ENCODE measurements at regions of chr12 and their contacts with region 1.

Region 1: GRCh38 chr12:45728630-45729232 is 775 bp upstream of the ARID2 start:
- DNase-seq: peak; percentile 96 to 98
- ATAC-seq: peak; percentile 79 to 86 (median 83)
- H3K4me3 ChIP-seq: peak overlapping the region; percentile 91
- H3K27ac ChIP-seq: peak overlapping the region; percentile 97
- H3K4me1 ChIP-seq: peaks cover 45% of the 10 kb centered on the region
- H3K27me3 ChIP-seq: no peaks in the 10 kb centered on the region
- CTCF ChIP-seq: peak; percentile 91

Region 2: GRCh38 chr12:45010059-45010458 is 718.7 kb before region 1 on chr12:
- intact Hi-C with region 1: no loop called
- DNase-seq: no peak
- ATAC-seq: no peak
- H3K4me3 ChIP-seq: no peak overlapping the region
- H3K27ac ChIP-seq: no peak overlapping the region
- H3K4me1 ChIP-seq: no peaks in the 10 kb centered on the region
- H3K27me3 ChIP-seq: no peaks in the 10 kb centered on the region
- CTCF ChIP-seq: no peak

Region 3: DNA sequence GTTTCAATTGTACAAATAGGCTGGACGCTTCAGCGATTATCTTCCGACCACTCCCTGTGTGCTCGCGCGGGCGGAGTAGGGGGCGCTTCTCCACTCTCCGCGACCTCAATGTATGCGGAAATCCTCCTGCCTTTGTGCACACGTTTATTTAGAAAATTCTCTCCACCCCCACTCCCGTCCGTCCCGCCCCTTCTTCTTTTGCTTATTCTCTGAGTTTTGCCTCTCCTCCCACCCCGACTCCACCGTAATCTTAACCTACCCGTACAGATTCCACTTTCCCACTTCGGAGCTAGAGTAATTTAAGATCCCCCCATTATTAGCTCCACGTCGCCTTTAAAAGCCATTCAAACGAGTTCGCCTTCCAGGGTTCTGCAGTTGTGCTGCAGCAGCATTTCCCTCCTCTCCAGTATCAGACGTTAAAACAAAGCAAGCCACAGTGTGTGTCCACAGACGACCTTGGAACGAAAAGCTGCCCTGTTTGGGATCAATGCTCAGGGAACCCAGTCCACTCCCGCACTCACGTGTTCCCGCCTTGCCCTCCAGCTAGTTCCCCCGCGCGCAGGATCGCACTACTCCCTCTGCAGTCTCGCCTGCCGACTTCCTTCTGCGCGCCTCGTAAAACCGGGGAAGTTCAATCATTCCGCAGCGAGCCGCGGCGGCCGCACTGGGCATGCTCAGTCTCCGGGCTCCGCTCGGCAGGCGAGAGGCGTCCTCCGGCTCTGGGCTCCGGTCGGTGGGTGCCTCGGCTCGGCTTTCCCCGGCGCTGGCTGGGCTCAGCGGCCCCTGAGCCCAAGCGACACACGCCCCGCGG is 513.1 kb before region 1 on chr12 and contains the start of gene ANO6:
- intact Hi-C with region 1: loop called in 1 of 2 experiments (anchors 10 kb)
- DNase-seq: peak; percentile 85 to 93
- ATAC-seq: peak; percentile 87 to 94 (median 89)
- H3K4me3 ChIP-seq: peak within 1 kb of the TSS; percentile 98
- H3K27ac ChIP-seq: peak within 1 kb of the TSS; percentile 98
- H3K4me1 ChIP-seq: peaks cover 27% of the 10 kb centered on the region
- H3K27me3 ChIP-seq: no peaks in the 10 kb centered on the region
- CTCF ChIP-seq: no peak
- total RNA-seq, gene ANO6: 51.5 to 121 (median 65.5) TPM

Region 4: GRCh38 chr12:45415393-45415817 is 313.3 kb before region 1 on chr12:
- intact Hi-C with region 1: loop called in 1 of 2 experiments (anchors 10 kb)
- DNase-seq: peak; percentile 74 to 83
- ATAC-seq: peak; percentile 97 to 99 (median 99)
- H3K4me3 ChIP-seq: no peak overlapping the region
- H3K27ac ChIP-seq: peak overlapping the region; percentile 82
- H3K4me1 ChIP-seq: peaks cover 9% of the 10 kb centered on the region
- H3K27me3 ChIP-seq: no peaks in the 10 kb centered on the region
- CTCF ChIP-seq: no peak

Region 5: GRCh38 chr12:45615268-45615667 is 113.5 kb before region 1 on chr12:
- intact Hi-C with region 1: loop called in 1 of 2 experiments (anchors 5 kb)
- DNase-seq: no peak
- ATAC-seq: peak; percentile 95 to 97 (median 96)
- H3K4me3 ChIP-seq: no peak overlapping the region
- H3K27ac ChIP-seq: peak overlapping the region; percentile 5
- H3K4me1 ChIP-seq: peaks cover 13% of the 10 kb centered on the region
- H3K27me3 ChIP-seq: no peaks in the 10 kb centered on the region
- CTCF ChIP-seq: no peak

Region 6: GRCh38 chr12:45990468-45991283 is 261.9 kb after region 1 on chr12 and contains the start of gene SCAF11:
- intact Hi-C with region 1: loop called in 1 of 2 experiments (anchors 5 kb)
- DNase-seq: peak; percentile 100
- ATAC-seq: peak; percentile 86 to 92 (median 90)
- H3K4me3 ChIP-seq: peak within 1 kb of the TSS; percentile 87
- H3K27ac ChIP-seq: peak within 1 kb of the TSS; percentile 99
- H3K4me1 ChIP-seq: peaks cover 34% of the 10 kb centered on the region
- H3K27me3 ChIP-seq: no peaks in the 10 kb centered on the region
- CTCF ChIP-seq: peak; percentile 91
- total RNA-seq, gene SCAF11: 63.5 to 90.0 (median 75.9) TPM